OCI-LY7 (cell line): ENCODE measurements at regions of chr10 and their contacts with region 1.

Region 1: DNA sequence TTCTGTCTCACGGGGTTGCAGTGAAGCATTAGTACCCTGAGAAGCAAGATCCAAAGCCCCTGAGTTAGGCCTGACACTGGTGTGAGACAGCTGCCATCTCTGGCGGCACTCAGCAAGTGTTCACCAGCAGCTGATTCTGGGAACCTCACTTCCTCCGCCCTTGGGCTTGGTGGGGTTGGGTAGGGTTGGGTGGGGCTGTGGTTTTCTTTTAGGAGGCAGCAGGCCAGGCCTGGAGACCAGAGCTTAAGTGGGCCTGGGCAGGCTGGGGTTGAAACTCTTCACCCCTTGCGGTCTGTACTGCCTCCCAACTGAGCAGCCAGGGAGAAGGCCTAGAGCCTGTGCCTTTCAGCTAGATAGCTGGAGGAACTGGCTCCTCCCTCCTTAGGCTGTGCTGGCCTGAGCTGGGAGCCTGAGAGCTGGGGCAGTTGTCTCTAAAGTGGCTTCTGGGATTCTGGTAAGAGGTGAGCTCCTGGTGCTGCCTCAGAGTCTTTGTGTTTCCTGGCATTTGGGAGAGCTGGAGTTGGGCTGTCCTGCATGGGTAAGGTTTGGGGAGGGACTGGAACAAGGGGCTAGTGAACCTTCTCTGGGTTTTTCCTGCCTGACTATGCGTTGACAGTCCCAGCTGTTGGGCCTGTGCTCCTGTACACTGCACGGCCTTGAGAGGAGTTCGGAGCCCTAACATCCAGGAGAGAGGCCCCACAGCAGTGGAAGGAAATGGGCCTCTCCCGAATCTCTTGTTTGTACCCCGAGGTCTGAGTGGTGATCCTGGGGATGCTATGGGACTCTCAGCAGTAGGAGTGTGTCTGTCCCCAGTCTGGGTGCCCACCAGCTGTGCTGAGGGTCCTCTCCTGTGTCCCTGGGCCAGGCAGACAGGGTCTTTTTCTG is 5.2 kb downstream of the TSPAN14 start:
- DNase-seq: peak; percentile 82
- H3K4me3 ChIP-seq: peak overlapping the region; percentile 32
- H3K27ac ChIP-seq: peak overlapping the region; percentile 93
- H3K4me1 ChIP-seq: peaks cover 86% of the 10 kb centered on the region
- CTCF ChIP-seq: peak; percentile 55; the same call in 1 of the 2 replicates

Region 2: DNA sequence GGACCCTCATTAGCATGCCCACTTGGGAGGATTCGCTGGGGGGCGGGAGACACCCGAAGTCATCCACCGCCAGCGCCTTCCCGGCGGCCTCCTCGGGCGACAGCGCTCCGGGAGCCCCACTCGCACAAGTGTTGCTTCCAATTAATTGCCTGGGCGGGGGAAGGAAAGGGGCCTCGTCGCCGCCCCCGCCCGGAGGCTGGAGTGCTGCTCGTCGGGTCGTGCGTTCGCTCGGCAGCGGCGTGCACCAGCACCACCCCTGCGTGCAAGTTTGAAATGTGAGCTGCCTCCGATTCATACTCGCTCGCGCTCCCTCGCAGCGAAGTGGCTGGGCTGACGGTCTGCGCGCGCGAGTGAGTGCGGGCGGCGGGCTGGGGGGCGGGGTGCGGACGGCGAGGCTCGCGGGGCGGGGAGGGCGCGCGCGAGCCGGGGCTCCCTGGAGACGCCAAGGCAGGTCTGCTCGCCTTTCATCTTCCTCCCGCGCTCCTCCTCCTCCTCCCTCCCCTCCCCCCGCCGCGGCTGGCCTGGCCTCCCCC is 1216.6 kb before region 1 on chr10:
- CTCF ChIA-PET with region 1: no interaction called
- POLR2A ChIA-PET with region 1: no interaction called
- intact Hi-C with region 1: loop called (anchors 10 kb)
- DNase-seq: peak; percentile 78
- H3K4me3 ChIP-seq: peak overlapping the region; percentile 76
- H3K27ac ChIP-seq: peak overlapping the region; percentile 90
- H3K4me1 ChIP-seq: peaks cover 49% of the 10 kb centered on the region
- CTCF ChIP-seq: no peak

Region 3: DNA sequence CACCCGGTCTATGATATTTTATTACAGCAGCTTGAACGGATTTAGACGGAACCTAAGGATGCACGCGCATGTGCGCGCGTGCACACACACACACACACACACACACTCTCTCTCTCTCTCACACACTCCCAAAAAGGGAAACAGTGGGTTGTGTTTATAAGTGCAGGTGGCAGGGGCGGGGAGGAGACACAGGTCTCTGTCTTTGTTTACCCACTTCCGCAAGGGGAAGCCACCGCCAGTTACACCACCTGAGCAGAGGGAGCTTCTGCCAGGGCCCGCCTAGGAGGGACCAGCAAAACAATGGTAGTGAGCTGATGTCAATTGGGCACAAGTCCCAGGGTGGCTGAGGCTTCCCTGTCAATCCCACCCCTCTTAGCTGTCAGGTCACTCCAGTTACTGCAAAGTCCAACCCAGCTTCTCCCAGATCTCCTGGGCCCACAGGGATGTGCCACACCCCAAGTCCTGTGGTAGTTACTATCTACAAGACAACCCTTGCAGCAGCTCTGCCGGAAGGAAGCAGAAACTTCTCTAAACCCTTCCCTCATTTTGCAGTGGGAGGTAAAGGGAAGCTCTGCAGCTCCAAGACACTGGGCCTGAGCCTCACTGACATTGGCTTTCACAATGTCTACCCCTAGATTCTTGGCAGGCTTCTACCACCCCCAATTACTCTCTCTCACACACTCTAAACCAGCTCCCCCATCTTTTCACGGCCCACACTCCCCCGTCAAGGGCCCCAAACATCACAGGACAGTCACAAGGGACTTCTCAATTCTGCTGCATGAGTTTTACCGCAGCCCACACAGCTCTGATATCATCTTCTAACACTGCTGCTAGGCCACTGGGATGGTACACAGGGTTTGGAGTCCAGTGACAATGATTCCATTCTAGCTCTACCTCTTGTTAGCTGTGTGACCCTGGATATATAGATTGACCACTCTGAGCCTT is 271.6 kb before region 1 on chr10:
- CTCF ChIA-PET with region 1: interaction called, 3 read pairs
- POLR2A ChIA-PET with region 1: no interaction called
- intact Hi-C with region 1: loop called (anchors 5 kb)
- DNase-seq: peak; percentile 96
- H3K4me3 ChIP-seq: peak overlapping the region; percentile 63
- H3K27ac ChIP-seq: peak overlapping the region; percentile 97
- H3K4me1 ChIP-seq: peaks cover 69% of the 10 kb centered on the region
- CTCF ChIP-seq: no peak

Region 4: GRCh38 chr10:80472234-80473095 is 13.2 kb after region 1 on chr10:
- CTCF ChIA-PET with region 1: interaction called, 4 read pairs
- POLR2A ChIA-PET with region 1: interaction called, 19 read pairs
- intact Hi-C with region 1: loop called (anchors 2 kb)
- DNase-seq: peak; percentile 66
- H3K4me3 ChIP-seq: peak overlapping the region; percentile 44
- H3K27ac ChIP-seq: peak overlapping the region; percentile 86
- H3K4me1 ChIP-seq: peaks cover 80% of the 10 kb centered on the region
- CTCF ChIP-seq: peak; percentile 36; the same call in 1 of the 2 replicates

Region 5: GRCh38 chr10:80504158-80504811 is 45.0 kb after region 1 on chr10:
- CTCF ChIA-PET with region 1: interaction called, 10 read pairs
- POLR2A ChIA-PET with region 1: interaction called, 4 read pairs
- intact Hi-C with region 1: no loop called
- DNase-seq: no peak
- H3K4me3 ChIP-seq: no peak overlapping the region
- H3K27ac ChIP-seq: no peak overlapping the region
- H3K4me1 ChIP-seq: no peaks in the 10 kb centered on the region
- CTCF ChIP-seq: no peak

Region 6: GRCh38 chr10:80515936-80516335 is 56.6 kb after region 1 on chr10:
- CTCF ChIA-PET with region 1: no interaction called
- POLR2A ChIA-PET with region 1: no interaction called
- intact Hi-C with region 1: no loop called
- DNase-seq: no peak
- H3K4me3 ChIP-seq: no peak overlapping the region
- H3K27ac ChIP-seq: no peak overlapping the region
- H3K4me1 ChIP-seq: no peaks in the 10 kb centered on the region
- CTCF ChIP-seq: no peak

Region 7: GRCh38 chr10:80642661-80643060 is 183.4 kb after region 1 on chr10:
- CTCF ChIA-PET with region 1: no interaction called
- POLR2A ChIA-PET with region 1: no interaction called
- intact Hi-C with region 1: no loop called
- DNase-seq: no peak
- H3K4me3 ChIP-seq: no peak overlapping the region
- H3K27ac ChIP-seq: no peak overlapping the region
- H3K4me1 ChIP-seq: no peaks in the 10 kb centered on the region
- CTCF ChIP-seq: no peak

Region 8: DNA sequence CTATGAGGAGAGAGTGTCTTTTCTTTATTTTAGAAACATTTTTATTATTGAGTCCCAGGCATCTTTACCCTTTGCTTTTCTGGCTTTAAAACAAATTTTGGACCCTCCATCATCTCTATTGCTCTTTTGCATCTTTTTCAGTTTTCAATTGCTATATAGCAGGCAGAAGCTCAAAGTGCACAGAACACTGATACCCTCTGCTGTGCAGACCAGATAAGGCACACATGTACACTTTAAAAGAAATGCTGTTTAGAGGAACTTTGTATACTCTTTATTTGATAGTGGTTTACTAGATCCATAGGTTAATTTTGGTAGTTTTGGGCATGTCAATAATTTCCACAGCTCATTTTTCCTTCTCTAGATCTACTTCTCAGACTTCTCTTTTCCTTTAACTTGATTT is 402.6 kb after region 1 on chr10:
- CTCF ChIA-PET with region 1: no interaction called
- POLR2A ChIA-PET with region 1: no interaction called
- intact Hi-C with region 1: no loop called
- DNase-seq: no peak
- H3K4me3 ChIP-seq: no peak overlapping the region
- H3K27ac ChIP-seq: no peak overlapping the region
- H3K4me1 ChIP-seq: no peaks in the 10 kb centered on the region
- CTCF ChIP-seq: no peak